ENCODE measurements at regions of chr1 and their contacts with region 1.

Region 1: DNA sequence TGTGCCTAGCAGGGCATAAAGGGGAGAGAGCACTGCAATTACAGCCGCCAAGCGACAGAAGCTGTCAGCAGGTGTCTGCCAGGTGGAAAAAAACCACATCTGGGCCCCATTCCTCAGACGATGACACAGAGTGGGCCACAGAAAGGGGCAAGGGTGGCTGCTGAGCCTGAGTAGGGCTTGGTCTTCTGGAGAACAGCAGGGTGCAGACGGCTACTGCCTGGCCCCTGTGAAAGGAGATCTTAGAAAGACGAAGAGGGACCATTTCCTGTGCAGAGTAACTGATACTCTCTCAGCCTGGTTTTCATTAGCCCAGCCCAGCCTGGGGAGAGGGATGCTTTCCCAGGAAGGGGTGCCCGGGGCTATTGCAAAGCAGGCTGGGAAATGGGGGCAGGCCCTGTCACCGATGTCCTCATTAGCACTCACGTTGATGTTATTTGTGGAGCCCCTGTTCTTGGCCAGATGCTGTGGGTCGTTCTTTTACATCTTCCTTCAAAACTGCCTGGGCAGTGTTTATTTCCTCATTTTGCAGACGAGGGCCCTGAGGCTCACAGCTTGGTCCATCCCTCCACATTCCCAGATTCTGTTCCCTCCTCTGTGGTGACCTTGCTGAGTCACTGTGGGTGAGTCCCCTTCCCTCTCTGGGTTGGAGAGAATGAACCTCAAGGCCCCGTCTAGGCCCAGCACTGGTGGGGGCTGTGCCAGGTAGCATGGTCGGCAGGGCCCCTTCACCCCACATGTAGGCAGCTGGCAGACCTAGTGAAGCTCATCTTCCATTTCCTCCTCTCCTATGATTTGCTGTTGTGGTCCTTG is 472.8 kb downstream of the PTPRU start:
- DNase-seq: peak; percentile 91
- H3K4me3 Mint-ChIP-seq: peak overlapping the region; percentile 4
- H3K27ac Mint-ChIP-seq: peak overlapping the region; percentile 88
- H3K4me1 Mint-ChIP-seq: peaks cover 51% of the 10 kb centered on the region
- H3K27me3 Mint-ChIP-seq: no peaks in the 10 kb centered on the region
- CTCF ChIP-seq: no peak

Region 2: DNA sequence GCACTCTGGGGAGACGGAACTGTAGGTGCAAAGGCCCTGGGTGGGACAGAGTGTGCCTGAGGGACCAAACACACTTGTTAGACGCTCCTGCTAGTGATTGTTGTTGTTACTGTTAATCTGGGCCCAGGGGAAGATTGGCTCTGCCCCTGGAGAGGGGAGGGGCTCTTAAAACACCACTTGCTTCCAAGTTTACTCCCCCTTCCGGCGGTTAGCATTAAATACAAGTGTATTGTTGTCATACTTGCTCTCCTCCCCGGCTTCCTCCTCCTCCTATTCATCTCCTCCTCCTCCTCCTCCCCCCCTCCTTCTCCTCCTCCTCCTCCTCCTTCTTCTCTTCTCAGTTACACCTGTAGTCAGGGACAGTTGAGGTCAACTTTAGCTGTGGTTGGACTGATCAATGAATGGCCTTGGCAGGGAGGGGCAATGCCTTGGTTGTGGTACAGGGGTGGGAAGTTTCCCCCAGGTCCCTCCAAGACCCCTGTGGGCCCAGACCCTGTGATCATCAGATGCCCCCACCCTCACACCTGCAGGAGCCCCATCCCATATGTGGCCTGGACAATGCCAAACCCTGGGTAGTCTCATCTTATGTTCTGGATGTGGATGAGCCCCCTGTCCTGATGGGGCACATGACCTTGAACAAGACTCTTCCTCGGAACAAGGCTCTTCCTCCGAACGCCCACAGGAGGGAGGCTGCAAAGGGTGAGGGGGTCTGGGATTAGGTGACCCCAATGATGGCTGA is 255.4 kb before region 1 on chr1:
- CTCF ChIA-PET with region 1: no interaction called
- POLR2A ChIA-PET with region 1: no interaction called
- intact Hi-C with region 1: no loop called
- DNase-seq: peak; percentile 70
- H3K4me3 Mint-ChIP-seq: no peak overlapping the region
- H3K27ac Mint-ChIP-seq: no peak overlapping the region
- H3K4me1 Mint-ChIP-seq: no peaks in the 10 kb centered on the region
- H3K27me3 Mint-ChIP-seq: peaks cover 32% of the 10 kb centered on the region
- CTCF ChIP-seq: peak; percentile 33

Region 3: GRCh38 chr1:29569971-29570634 is 139.0 kb before region 1 on chr1:
- CTCF ChIA-PET with region 1: interaction called, 4 read pairs
- POLR2A ChIA-PET with region 1: interaction called, 4 read pairs
- intact Hi-C with region 1: loop called (anchors 2 kb)
- DNase-seq: peak; percentile 98
- H3K4me3 Mint-ChIP-seq: peak overlapping the region; percentile 11
- H3K27ac Mint-ChIP-seq: peak overlapping the region; percentile 84
- H3K4me1 Mint-ChIP-seq: peaks cover 16% of the 10 kb centered on the region
- H3K27me3 Mint-ChIP-seq: no peaks in the 10 kb centered on the region
- CTCF ChIP-seq: no peak

Measured in MCF 10A (cell line).